ENCODE measurements at regions of chr5 and their contacts with region 1.

Region 1: DNA sequence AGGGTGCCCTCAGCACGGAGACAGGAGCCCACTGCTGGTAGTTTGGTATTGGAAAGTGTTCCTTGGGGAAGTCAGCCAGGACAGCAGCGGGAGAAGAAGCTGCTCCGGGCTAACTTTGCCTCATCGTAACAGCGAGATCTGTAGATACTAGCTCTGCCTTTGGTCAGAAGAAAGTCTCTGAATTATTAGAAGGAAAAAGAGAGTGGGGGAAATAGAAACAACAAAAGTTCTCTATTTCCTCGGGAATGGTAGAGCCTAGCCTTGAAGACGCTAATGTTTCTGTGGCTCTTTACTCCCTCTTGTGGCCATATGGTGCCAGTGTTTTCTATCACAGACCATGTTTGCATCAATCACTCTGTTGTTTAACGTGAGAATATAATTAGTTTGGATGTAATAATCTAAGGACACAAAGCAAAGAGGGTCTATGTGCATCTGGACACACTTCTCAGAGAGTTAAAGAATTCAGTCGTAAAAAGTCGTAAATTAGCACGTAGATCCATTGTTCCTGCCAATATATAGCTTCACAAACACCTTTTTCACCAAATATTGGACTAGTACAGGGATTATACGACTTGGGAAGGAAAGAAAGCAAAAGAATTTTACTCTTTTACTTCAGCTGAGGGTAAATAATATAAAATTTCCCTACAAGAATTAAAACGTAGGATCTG is 40.2 kb upstream of the HSD17B4 start:
- DNase-seq: peak; percentile 77
- H3K4me3 Mint-ChIP-seq: peak overlapping the region; percentile 72
- H3K27ac Mint-ChIP-seq: peak overlapping the region; percentile 77
- H3K4me1 Mint-ChIP-seq: peaks cover 36% of the 10 kb centered on the region
- H3K27me3 Mint-ChIP-seq: no peaks in the 10 kb centered on the region

Region 2: GRCh38 chr5:119022017-119022745 is 389.9 kb before region 1 on chr5:
- CTCF ChIA-PET with region 1: interaction called, 19 read pairs
- intact Hi-C with region 1: loop called (anchors 1 kb)
- DNase-seq: no peak
- H3K4me3 Mint-ChIP-seq: no peak overlapping the region
- H3K27ac Mint-ChIP-seq: no peak overlapping the region
- H3K4me1 Mint-ChIP-seq: peaks cover 5% of the 10 kb centered on the region
- H3K27me3 Mint-ChIP-seq: no peaks in the 10 kb centered on the region

Region 3: DNA sequence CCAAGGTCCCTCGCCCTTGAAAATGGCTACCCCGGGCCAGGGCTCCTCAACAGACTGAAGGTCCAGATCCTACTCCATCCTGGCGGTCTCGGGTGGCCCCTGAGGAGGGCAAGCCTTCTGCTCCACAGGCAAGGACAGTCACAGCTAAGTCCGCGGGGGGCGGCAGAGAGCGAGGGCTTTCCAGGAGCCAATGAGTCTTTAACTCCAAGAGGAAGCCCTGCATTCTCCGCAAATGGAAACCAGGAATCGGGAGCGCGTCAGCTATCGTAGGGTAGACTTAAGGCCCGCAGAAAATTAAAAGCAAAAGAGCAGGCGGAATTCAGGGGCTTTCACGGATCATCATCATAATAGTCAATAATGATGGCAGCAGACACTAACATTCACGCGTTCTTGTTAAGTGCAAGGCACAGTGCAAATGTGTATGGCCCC is 144.1 kb before region 1 on chr5:
- CTCF ChIA-PET with region 1: interaction called, 18 read pairs
- intact Hi-C with region 1: loop called (anchors 2 kb)
- DNase-seq: peak; percentile 93
- H3K4me3 Mint-ChIP-seq: peak overlapping the region; percentile 91
- H3K27ac Mint-ChIP-seq: peak overlapping the region; percentile 97
- H3K4me1 Mint-ChIP-seq: peaks cover 64% of the 10 kb centered on the region
- H3K27me3 Mint-ChIP-seq: no peaks in the 10 kb centered on the region

Region 4: DNA sequence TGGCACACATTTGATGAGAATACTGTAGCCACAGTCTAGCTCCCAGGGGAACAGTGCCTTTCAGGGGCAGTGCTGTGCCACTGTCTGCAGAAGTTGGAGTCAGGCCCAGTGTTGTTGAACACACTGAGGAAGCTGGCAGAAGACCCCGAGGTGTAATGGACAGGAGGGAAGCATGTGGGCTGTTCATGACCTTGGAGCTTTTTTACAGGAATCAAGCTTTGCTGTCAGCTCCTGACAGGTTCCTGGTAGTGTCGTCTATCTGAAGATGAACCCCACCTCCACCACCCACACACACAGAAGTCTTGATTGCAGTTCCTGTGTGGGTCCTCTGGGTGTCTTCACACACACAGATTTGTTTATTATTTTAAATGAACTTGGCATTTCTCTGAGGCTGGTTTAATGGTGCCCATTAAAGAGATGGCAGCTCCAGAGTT is 96.5 kb before region 1 on chr5:
- CTCF ChIA-PET with region 1: interaction called, 71 read pairs
- intact Hi-C with region 1: loop called (anchors 1 kb)
- DNase-seq: peak; percentile 83
- H3K4me3 Mint-ChIP-seq: peak overlapping the region; percentile 36
- H3K27ac Mint-ChIP-seq: peak overlapping the region; percentile 96
- H3K4me1 Mint-ChIP-seq: peaks cover 94% of the 10 kb centered on the region
- H3K27me3 Mint-ChIP-seq: no peaks in the 10 kb centered on the region

Region 5: GRCh38 chr5:119347991-119348390 is 64.1 kb before region 1 on chr5:
- CTCF ChIA-PET with region 1: interaction called, 10 read pairs
- intact Hi-C with region 1: no loop called
- DNase-seq: no peak
- H3K4me3 Mint-ChIP-seq: no peak overlapping the region
- H3K27ac Mint-ChIP-seq: peak overlapping the region; percentile 88
- H3K4me1 Mint-ChIP-seq: peaks cover 86% of the 10 kb centered on the region
- H3K27me3 Mint-ChIP-seq: no peaks in the 10 kb centered on the region

Region 6: DNA sequence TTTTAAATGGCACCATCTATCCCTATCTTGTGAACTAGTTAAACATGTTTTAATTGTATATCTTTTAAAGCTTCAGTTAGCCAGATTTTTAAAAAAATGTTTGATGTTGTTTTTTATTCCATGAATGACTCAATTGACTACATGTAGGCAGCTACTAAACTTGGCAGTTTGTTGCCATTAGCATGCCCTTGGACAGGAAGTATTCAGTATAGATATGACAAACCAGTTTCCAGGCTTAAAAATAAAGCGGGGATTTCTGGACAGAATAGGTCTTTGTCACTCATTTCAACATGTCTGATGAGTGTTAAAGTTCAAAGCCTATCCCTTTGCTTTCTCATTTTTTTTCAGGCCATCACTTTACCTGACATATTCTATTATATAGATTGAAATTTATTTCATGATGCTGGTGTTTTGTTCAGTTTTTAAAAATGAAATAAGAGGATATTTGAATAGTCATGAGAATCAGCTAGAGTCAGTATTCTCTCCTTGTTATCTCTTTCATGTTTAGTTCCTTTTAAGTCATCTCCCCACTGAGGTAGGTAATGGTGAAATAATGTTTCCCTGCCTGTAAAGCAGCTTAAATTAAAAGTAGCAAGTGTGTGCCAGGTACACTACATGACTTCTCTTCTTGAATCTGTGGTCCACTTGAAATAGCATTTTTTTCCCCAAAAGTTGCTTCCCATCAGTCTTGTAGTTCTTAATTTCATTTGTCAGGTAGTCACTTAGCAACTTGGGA is 44.4 kb before region 1 on chr5:
- CTCF ChIA-PET with region 1: interaction called, 10 read pairs
- intact Hi-C with region 1: loop called (anchors 1 kb)
- DNase-seq: no peak
- H3K4me3 Mint-ChIP-seq: peak overlapping the region; percentile 60
- H3K27ac Mint-ChIP-seq: peak overlapping the region; percentile 98
- H3K4me1 Mint-ChIP-seq: peaks cover 87% of the 10 kb centered on the region
- H3K27me3 Mint-ChIP-seq: no peaks in the 10 kb centered on the region

Region 7: GRCh38 chr5:119452373-119453039 is 40.4 kb after region 1 on chr5 and contains the start of gene HSD17B4:
- CTCF ChIA-PET with region 1: interaction called, 4 read pairs
- intact Hi-C with region 1: loop called (anchors 2 kb)
- DNase-seq: peak; percentile 89
- H3K4me3 Mint-ChIP-seq: peak within 1 kb of the TSS; percentile 88
- H3K27ac Mint-ChIP-seq: peak within 1 kb of the TSS; percentile 80
- H3K4me1 Mint-ChIP-seq: peaks cover 18% of the 10 kb centered on the region
- H3K27me3 Mint-ChIP-seq: no peaks in the 10 kb centered on the region
- total RNA-seq, gene HSD17B4: 85.6 to 96.3 TPM

Measured in activated naive CD4-positive, alpha-beta T cell treated with anti-CD3 and anti-CD28 coated beads for 36 hours (primary cell).